Activated B cell treated with CpG ODN at 0.5 μM for 24 hours (primary cell): ENCODE measurements at regions of chr4 and their contacts with region 1.

Region 1: GRCh38 chr4:78661921-78662521 is 110.5 kb downstream of the ANXA3 start:
- DNase-seq: no peak
- ATAC-seq: peak; percentile 51
- H3K4me3 Mint-ChIP-seq: peak overlapping the region; percentile 57
- H3K27ac Mint-ChIP-seq: peak overlapping the region; percentile 83
- H3K4me1 Mint-ChIP-seq: peaks cover 78% of the 10 kb centered on the region
- H3K27me3 Mint-ChIP-seq: no peaks in the 10 kb centered on the region
- CTCF ChIP-seq: no peak

Region 2: DNA sequence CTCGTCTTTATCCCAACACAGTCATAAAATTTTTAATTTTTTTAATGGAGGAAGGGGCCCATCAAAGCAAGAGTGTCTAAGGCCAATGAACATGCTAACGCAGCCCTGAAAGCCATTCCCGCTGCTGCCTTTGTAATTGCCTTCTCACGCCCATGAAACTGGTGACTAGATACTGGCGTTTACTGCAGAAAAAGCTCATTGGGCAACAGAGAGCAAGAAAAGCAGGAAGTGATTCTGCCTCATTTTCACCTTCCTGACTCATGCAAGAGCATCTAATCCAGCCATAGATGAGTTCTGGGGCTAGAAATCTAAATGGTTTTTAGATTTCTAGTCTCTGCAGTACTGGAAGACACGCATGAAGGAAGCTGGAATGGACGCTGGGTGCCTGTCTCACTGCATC is 38.0 kb before region 1 on chr4:
- CTCF ChIA-PET with region 1: no interaction called
- POLR2A ChIA-PET with region 1: interaction called, 11 read pairs
- intact Hi-C with region 1: loop called (anchors 2 kb)
- DNase-seq: no peak
- ATAC-seq: peak; percentile 31
- H3K4me3 Mint-ChIP-seq: no peak overlapping the region
- H3K27ac Mint-ChIP-seq: no peak overlapping the region
- H3K4me1 Mint-ChIP-seq: peaks cover 46% of the 10 kb centered on the region
- H3K27me3 Mint-ChIP-seq: no peaks in the 10 kb centered on the region
- CTCF ChIP-seq: no peak

Region 3: GRCh38 chr4:78629991-78630541 is 32.0 kb before region 1 on chr4:
- CTCF ChIA-PET with region 1: no interaction called
- POLR2A ChIA-PET with region 1: interaction called, 18 read pairs
- intact Hi-C with region 1: loop called (anchors 2 kb)
- DNase-seq: no peak
- ATAC-seq: peak; percentile 13
- H3K4me3 Mint-ChIP-seq: peak overlapping the region; percentile 7
- H3K27ac Mint-ChIP-seq: peak overlapping the region; percentile 94
- H3K4me1 Mint-ChIP-seq: peaks cover 88% of the 10 kb centered on the region
- H3K27me3 Mint-ChIP-seq: no peaks in the 10 kb centered on the region
- CTCF ChIP-seq: no peak

Region 4: GRCh38 chr4:78650091-78651024 is 11.7 kb before region 1 on chr4:
- CTCF ChIA-PET with region 1: interaction called, 15 read pairs
- POLR2A ChIA-PET with region 1: interaction called, 14 read pairs
- intact Hi-C with region 1: no loop called
- DNase-seq: no peak
- ATAC-seq: no peak
- H3K4me3 Mint-ChIP-seq: no peak overlapping the region
- H3K27ac Mint-ChIP-seq: no peak overlapping the region
- H3K4me1 Mint-ChIP-seq: peaks cover 36% of the 10 kb centered on the region
- H3K27me3 Mint-ChIP-seq: no peaks in the 10 kb centered on the region
- CTCF ChIP-seq: no peak